A673 (cell line): ENCODE measurements at regions of chr16 and their contacts with region 1.

Region 1: GRCh38 chr16:27972500-27972899 is 91.0 kb downstream of the GSG1L start:
- DNase-seq: peak; percentile 57
- H3K4me3 ChIP-seq: no peak overlapping the region
- H3K27ac ChIP-seq: no peak overlapping the region
- H3K4me1 ChIP-seq: no peaks in the 10 kb centered on the region
- H3K27me3 ChIP-seq: no peaks in the 10 kb centered on the region
- CTCF ChIP-seq: peak; percentile 73

Region 2: DNA sequence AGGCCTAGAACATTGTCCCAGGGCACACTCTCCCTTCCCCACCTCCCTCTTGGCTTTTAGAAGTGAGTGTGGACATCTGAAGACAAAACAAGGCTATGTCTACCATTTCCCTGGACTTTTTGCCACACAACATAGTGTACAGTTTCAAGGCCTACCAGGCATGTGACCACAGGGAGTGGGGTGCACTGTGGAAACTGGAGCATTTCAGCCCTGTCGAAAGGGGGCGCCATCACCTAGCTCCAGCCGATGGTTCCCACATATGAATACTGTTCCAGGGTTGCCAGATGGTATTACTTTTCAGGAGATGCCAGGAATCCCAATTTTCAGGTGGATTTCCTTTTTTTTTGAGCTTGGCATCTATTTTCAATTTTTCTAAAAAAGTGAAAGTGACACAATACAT is 281.9 kb before region 1 on chr16:
- CTCF ChIA-PET with region 1: no interaction called
- POLR2A ChIA-PET with region 1: no interaction called
- intact Hi-C with region 1: no loop called
- DNase-seq: peak; percentile 15
- H3K4me3 ChIP-seq: no peak overlapping the region
- H3K27ac ChIP-seq: no peak overlapping the region
- H3K4me1 ChIP-seq: no peaks in the 10 kb centered on the region
- H3K27me3 ChIP-seq: no peaks in the 10 kb centered on the region
- CTCF ChIP-seq: peak; percentile 64

Region 3: GRCh38 chr16:28231763-28232162 is 259.3 kb after region 1 on chr16:
- CTCF ChIA-PET with region 1: interaction called, 17 read pairs
- POLR2A ChIA-PET with region 1: no interaction called
- intact Hi-C with region 1: no loop called
- DNase-seq: no peak
- H3K4me3 ChIP-seq: no peak overlapping the region
- H3K27ac ChIP-seq: no peak overlapping the region
- H3K4me1 ChIP-seq: no peaks in the 10 kb centered on the region
- H3K27me3 ChIP-seq: no peaks in the 10 kb centered on the region
- CTCF ChIP-seq: no peak